ENCODE measurements at regions of chr2 and their contacts with region 1.

Region 1: DNA sequence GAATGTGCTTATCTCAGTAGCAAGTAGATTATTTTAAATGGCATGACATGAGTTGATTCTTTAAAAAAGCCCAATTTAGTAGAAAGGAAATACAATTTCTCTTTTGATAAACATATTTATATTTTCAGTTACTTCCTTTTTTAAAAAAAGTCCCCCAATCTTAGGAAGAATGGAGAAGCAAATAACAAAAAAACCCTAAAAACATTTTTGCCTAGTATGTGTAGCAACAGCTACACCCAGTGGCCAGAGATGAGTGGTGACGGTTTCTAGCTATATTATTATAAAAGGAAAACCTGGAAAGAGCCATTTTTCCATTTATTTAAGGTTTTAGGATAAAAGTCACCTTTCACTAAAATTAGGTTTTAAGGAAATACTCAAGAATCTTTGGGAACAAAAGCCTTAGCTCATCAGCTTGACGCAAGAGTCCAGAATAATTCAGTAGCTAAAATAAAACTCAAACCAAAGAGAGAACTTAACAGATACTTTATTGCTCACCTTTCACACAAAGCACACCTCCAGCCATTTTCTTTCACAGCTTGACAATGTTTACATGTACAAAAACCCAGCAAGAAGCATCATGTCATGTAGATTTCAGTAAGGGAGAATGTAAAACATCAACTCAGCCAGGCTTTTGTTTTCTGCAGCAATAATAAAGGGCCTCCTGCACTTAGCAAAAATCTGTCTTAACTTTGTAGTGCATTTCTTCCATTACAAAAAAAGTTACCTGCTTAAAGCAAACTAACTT is 15.7 kb downstream of the FAM98A start:
- DNase-seq: peak; percentile 32 to 35
- H3K4me3 ChIP-seq: no peak overlapping the region
- H3K27ac ChIP-seq: peak overlapping the region in 1 of 3 donors; percentile 20
- H3K4me1 ChIP-seq: no peaks in the 10 kb centered on the region
- H3K27me3 ChIP-seq: no peaks in the 10 kb centered on the region
- CTCF ChIP-seq: peak; percentile 61 to 91 (median 80)
- POLR2A ChIP-seq: no peak

Region 2: DNA sequence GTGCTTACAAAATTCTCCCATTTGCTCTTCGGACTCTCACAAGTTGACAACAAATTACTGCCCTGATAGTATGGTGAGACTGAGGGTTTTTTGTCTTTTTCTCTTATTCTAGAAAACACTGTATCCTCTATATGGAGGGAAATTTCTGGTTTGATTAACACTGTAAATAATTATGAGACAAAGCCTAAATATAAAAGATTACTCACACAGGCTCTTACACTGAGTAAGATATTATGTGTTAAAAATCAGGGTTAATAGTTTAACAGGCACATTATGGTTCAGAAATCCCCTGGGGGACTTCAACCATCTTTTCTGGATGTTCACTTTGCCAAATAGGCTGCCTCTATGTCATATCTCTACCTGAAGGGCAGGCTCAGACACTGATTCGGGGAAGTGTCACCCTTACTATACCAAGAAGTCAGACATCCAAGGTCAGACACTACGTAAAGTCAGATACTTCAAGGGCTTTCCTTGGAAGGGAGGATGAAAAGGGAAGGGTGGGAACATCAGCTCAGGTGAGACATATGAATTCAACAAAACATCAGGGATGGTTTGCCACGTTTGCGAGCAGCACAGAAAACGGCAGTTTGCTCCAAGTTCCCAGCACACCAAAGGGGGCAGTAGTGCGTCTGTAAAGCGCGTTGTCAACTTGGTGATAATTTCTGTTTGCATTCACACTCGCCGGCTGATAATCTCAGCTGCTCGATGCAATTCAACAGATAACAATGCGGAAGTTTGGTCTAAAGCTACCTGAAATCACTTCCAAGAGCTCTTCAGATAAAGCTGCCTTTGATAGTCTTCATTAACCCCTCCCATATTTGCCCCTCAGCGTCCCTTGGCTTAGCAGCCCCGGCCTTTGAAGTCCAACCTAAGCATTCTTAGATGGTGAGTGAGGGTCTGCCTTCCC is 107.9 kb before region 1 on chr2:
- intact Hi-C with region 1: loop called (anchors 10 kb)
- DNase-seq: peak; percentile 80 to 85
- H3K4me3 ChIP-seq: peak overlapping the region; percentile 23 to 50 (median 40)
- H3K27ac ChIP-seq: peak overlapping the region; percentile 91 to 95 (median 94)
- H3K4me1 ChIP-seq: peaks cover 29 to 31% of the 10 kb centered on the region in 2 donors
- H3K27me3 ChIP-seq: no peaks in the 10 kb centered on the region
- CTCF ChIP-seq: peak; percentile 39 to 87 (median 76)
- POLR2A ChIP-seq: no peak

Region 3: GRCh38 chr2:33673937-33674336 is 90.6 kb after region 1 on chr2:
- intact Hi-C with region 1: no loop called
- DNase-seq: no peak
- H3K4me3 ChIP-seq: no peak overlapping the region
- H3K27ac ChIP-seq: no peak overlapping the region
- H3K4me1 ChIP-seq: no peaks in the 10 kb centered on the region
- H3K27me3 ChIP-seq: no peaks in the 10 kb centered on the region
- CTCF ChIP-seq: peak in 2 of 6 experiments; percentile 19 to 26
- POLR2A ChIP-seq: no peak

Measured in thyroid gland (tissue), 4 donors.